Naive thymus-derived CD4-positive, alpha-beta T cell (primary cell): ENCODE measurements at regions of chr12 and their contacts with region 1.

Region 1: GRCh38 chr12:6890789-6891645 is 13.6 kb upstream of the LRRC23 start:
- DNase-seq: peak; percentile 95 to 100 (median 97)
- ATAC-seq: peak; percentile 96
- H3K4me3 ChIP-seq: peak overlapping the region; percentile 93
- H3K4me3 Mint-ChIP-seq: peak overlapping the region; percentile 78 to 86 (median 84)
- H3K27ac ChIP-seq: peak overlapping the region; percentile 86
- H3K27ac Mint-ChIP-seq: peak overlapping the region; percentile 82 to 94 (median 90)
- H3K4me1 ChIP-seq: peaks cover 6 to 10% of the 10 kb centered on the region in 2 donors
- H3K4me1 Mint-ChIP-seq: peaks cover 0 to 31% (median 11%) of the 10 kb centered on the region in 7 donors
- H3K27me3 ChIP-seq: no peaks in the 10 kb centered on the region
- H3K27me3 Mint-ChIP-seq: no peaks in the 10 kb centered on the region

Region 2: DNA sequence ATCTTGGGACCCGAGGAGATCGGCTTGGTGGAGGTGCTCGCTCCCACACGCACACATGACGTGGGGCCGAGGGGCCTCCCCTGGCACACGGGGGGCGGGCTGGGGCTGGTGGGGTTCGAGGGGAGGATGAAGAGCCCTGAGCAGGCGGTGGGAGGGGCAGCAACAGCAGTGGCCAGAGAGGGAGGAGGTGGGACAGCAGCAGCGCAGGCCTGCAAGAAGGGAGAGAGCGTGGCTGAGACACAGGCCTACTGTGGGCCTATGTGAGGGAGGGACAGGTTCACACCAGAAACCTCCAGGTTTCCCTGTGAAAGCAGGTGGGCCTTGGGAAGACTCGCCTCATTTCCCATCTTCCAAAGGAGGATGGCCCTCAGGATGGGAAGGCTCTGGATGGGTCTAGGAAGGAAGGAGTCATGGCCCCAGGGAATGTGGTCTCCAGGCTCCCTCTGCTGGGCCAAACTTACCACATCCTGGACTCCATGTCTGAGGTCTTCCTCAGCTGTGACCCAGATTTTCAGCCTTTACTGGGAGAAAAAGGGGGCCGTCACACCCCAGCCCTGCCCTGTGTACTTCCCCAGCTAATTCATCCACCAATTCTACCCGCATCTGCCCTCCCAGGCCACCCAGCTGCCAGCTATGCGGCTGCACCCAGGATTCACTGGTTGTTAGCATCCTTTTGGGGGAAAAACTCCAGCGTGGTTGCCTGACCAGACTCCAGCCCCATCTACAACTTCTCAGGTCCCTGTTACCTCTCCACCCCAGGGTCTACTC is 193.2 kb before region 1 on chr12:
- CTCF ChIA-PET with region 1: no interaction called
- POLR2A ChIA-PET with region 1: no interaction called
- intact Hi-C with region 1: loop called in 1 of 2 experiments (anchors 1 kb)
- DNase-seq: no peak
- ATAC-seq: peak; percentile 25
- H3K4me3 ChIP-seq: no peak overlapping the region
- H3K4me3 Mint-ChIP-seq: peak overlapping the region in 1 of 10 donors; percentile 25
- H3K27ac ChIP-seq: no peak overlapping the region
- H3K27ac Mint-ChIP-seq: peak overlapping the region in 2 of 9 donors; percentile 24 to 51
- H3K4me1 ChIP-seq: peaks cover 5 to 8% of the 10 kb centered on the region in 2 donors
- H3K4me1 Mint-ChIP-seq: peaks cover 9 to 39% (median 28%) of the 10 kb centered on the region in 7 donors
- H3K27me3 ChIP-seq: peaks cover 0 to 6% of the 10 kb centered on the region in 2 donors
- H3K27me3 Mint-ChIP-seq: peaks cover 0 to 47% (median 29%) of the 10 kb centered on the region in 5 donors

Region 3: DNA sequence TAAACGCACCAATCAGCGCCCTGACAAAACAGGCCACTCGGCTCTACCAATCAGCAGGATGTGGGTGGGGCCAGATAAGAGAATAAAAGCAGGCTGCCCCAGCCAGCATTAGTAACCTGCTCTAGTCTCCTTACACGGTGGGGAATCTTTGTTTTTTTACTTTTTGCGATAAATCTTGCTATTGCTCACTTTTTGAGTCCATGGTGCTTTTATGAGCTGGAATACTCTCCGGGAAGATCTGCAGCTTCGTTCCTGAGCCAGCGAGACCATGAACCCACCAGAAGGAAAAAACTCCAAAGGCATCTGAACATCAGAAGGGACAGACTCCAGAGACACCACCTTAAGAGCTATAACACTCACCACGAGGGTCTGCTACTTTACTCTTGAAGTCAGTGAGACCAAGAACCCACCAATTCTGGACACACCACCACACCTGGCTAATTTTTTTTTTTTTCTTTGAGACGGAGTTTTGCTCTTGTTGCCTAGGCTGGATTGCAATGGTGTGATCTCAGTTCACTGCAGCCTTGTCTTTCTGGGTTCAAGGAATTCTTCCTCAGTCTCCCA is 174.1 kb before region 1 on chr12:
- CTCF ChIA-PET with region 1: no interaction called
- POLR2A ChIA-PET with region 1: no interaction called
- intact Hi-C with region 1: no loop called
- DNase-seq: no peak
- ATAC-seq: no peak
- H3K4me3 ChIP-seq: no peak overlapping the region
- H3K4me3 Mint-ChIP-seq: no peak overlapping the region
- H3K27ac ChIP-seq: no peak overlapping the region
- H3K27ac Mint-ChIP-seq: peak overlapping the region in 1 of 9 donors; percentile 12
- H3K4me1 ChIP-seq: no peaks in the 10 kb centered on the region
- H3K4me1 Mint-ChIP-seq: peaks cover 0 to 3% (median 0%) of the 10 kb centered on the region in 7 donors
- H3K27me3 ChIP-seq: no peaks in the 10 kb centered on the region
- H3K27me3 Mint-ChIP-seq: peaks cover 0 to 5% (median 3%) of the 10 kb centered on the region in 5 donors

Region 4: DNA sequence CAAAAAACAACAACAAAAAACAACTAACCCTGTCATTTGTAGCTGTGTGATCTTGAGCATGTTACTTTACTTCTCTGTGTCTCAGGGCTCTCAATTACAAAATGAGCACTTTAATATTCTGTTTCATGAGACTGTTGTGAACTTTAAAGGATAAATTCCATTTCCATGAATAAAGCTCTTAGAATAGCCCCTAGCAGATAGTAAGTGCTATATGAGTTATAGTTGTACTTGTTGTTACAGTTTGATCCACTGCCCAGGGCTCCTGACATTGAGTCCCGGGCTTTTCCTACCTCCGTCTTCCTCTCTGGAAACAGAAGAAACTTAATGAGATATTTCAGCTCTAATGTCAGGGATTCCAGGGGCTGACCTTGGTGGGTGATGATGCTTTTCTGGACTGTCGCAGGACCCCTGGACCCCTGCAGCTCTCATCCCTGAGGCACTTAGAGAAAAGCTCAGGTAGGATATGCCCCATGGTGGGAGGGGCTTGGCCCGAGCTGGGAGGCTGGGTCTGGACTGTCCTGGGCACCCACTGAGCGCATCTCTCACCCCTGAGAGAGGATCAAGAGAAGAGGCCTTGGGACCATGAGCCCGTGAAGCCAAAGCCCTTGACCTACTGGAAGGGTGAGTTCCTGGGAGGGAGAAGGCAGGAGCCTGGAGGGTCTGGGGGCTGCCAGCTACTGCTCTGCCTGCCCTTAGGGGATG is 57.7 kb before region 1 on chr12:
- CTCF ChIA-PET with region 1: interaction called, 3 read pairs
- POLR2A ChIA-PET with region 1: interaction called, 3 read pairs
- intact Hi-C with region 1: loop called in 1 of 2 experiments (anchors 1 kb)
- DNase-seq: no peak
- ATAC-seq: no peak
- H3K4me3 ChIP-seq: no peak overlapping the region
- H3K4me3 Mint-ChIP-seq: no peak overlapping the region
- H3K27ac ChIP-seq: no peak overlapping the region
- H3K27ac Mint-ChIP-seq: no peak overlapping the region
- H3K4me1 ChIP-seq: peaks cover 0 to 4% of the 10 kb centered on the region in 2 donors
- H3K4me1 Mint-ChIP-seq: peaks cover 0 to 16% (median 12%) of the 10 kb centered on the region in 7 donors
- H3K27me3 ChIP-seq: peaks cover 0 to 4% of the 10 kb centered on the region in 2 donors
- H3K27me3 Mint-ChIP-seq: peaks cover 0 to 32% (median 0%) of the 10 kb centered on the region in 5 donors

Region 5: GRCh38 chr12:6904280-6905278 is 13.6 kb after region 1 on chr12 and contains the start of gene LRRC23:
- CTCF ChIA-PET with region 1: interaction called, 6 read pairs
- POLR2A ChIA-PET with region 1: interaction called, 18 read pairs
- intact Hi-C with region 1: loop called (anchors 1 kb)
- DNase-seq: peak; percentile 89 to 98 (median 95)
- ATAC-seq: peak; percentile 98
- H3K4me3 ChIP-seq: peak within 1 kb of the TSS; percentile 75
- H3K4me3 Mint-ChIP-seq: peak within 1 kb of the TSS in 1 of 10 donors; percentile 8
- H3K27ac ChIP-seq: peak within 1 kb of the TSS; percentile 93
- H3K27ac Mint-ChIP-seq: peak within 1 kb of the TSS in 1 of 9 donors; percentile 78
- H3K4me1 ChIP-seq: peaks cover 14 to 17% of the 10 kb centered on the region in 2 donors
- H3K4me1 Mint-ChIP-seq: peaks cover 0 to 10% (median 3%) of the 10 kb centered on the region in 7 donors
- H3K27me3 ChIP-seq: no peaks in the 10 kb centered on the region
- H3K27me3 Mint-ChIP-seq: no peaks in the 10 kb centered on the region
- total RNA-seq, gene LRRC23: 6.6 to 12.1 (median 7.3) TPM

Region 6: GRCh38 chr12:6914246-6914946 is 23.4 kb after region 1 on chr12 and contains the start of gene ENO2:
- CTCF ChIA-PET with region 1: interaction called, 3 read pairs
- POLR2A ChIA-PET with region 1: interaction called, 6 read pairs
- intact Hi-C with region 1: loop called (anchors 1 kb)
- DNase-seq: peak; percentile 68 to 90 (median 81)
- ATAC-seq: peak; percentile 96
- H3K4me3 ChIP-seq: peak within 1 kb of the TSS; percentile 79
- H3K4me3 Mint-ChIP-seq: peak within 1 kb of the TSS; percentile 88 to 100 (median 96)
- H3K27ac ChIP-seq: peak within 1 kb of the TSS; percentile 86
- H3K27ac Mint-ChIP-seq: peak within 1 kb of the TSS; percentile 86 to 99 (median 93)
- H3K4me1 ChIP-seq: peaks cover 11 to 14% of the 10 kb centered on the region in 2 donors
- H3K4me1 Mint-ChIP-seq: peaks cover 0 to 53% (median 36%) of the 10 kb centered on the region in 7 donors
- H3K27me3 ChIP-seq: no peaks in the 10 kb centered on the region
- H3K27me3 Mint-ChIP-seq: peaks cover 0 to 4% (median 0%) of the 10 kb centered on the region in 5 donors
- total RNA-seq, gene ENO2: 65.3 to 193 (median 178) TPM

Region 7: DNA sequence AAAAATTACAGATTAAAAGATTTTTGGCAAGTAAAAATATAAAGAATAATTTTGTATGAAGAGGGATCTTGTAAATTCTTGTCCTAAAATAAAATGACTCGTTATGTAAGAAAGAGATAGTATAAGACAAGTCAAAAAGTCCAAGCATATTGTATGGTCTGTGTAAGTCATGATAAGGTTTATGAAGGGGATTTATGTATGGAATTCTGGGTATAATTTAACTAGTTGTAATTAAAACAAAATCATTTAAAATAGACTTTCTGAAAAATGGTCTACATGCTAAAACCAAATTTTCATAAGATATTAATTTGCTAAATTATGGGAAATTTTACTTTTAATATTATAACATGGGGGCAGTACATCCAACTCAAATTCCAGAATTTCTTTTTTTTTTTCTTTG is 280.8 kb after region 1 on chr12:
- CTCF ChIA-PET with region 1: no interaction called
- POLR2A ChIA-PET with region 1: no interaction called
- intact Hi-C with region 1: no loop called
- DNase-seq: no peak
- ATAC-seq: no peak
- H3K4me3 ChIP-seq: no peak overlapping the region
- H3K4me3 Mint-ChIP-seq: no peak overlapping the region
- H3K27ac ChIP-seq: no peak overlapping the region
- H3K27ac Mint-ChIP-seq: no peak overlapping the region
- H3K4me1 ChIP-seq: no peaks in the 10 kb centered on the region
- H3K4me1 Mint-ChIP-seq: no peaks in the 10 kb centered on the region
- H3K27me3 ChIP-seq: no peaks in the 10 kb centered on the region
- H3K27me3 Mint-ChIP-seq: peaks cover 5 to 38% (median 31%) of the 10 kb centered on the region in 5 donors